Naive thymus-derived CD4-positive, alpha-beta T cell (primary cell): ENCODE measurements at regions of chr16 and their contacts with region 1.

Region 1: DNA sequence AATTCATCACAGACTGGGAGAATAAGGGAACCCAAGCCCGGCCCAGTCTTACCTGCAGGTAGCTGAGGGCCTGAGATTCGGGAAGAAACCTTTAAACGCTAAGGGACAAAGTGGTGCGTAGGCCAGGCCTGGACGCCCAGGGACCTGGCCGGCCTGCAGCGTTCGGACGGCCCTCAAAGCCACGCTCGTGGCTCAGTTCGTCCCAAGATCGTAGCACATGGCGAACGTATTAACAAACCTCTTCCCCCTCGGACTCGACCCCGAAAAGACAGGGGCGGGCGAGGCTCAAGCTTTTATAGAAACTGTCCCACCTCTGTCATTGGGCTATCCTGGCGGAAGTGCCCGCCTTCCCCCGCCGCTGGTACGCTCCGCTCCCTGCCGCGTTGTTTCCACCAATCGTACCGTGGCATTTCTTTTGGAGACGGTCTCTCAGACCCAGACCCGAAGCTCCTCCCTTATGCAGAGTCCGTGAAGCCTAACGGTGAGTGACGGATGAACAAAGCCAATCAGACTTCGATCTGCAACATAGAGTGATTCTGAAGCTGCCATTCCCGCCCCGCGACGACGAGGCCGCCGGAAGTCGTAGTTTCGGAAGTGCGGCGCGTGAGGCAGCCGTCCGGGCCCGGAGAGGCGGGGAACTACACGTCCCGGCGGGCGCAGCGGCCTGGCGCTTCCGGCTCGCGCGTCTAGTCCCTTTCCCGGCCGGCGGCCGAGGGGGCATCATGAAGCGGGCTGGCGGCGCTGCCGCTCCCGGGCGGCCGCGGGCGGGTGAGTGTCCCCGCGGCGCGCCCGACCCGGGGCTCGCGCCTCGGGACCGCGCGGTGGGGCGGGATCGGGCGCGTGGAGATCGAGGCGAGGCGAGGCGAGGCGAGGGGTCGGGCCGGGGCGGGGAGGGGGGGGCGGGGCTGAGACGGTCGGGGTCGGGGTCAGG is at the start of gene TRAF7:
- DNase-seq: peak; percentile 85 to 99 (median 98)
- ATAC-seq: peak; percentile 95
- H3K4me3 ChIP-seq: peak within 1 kb of the TSS; percentile 79
- H3K4me3 Mint-ChIP-seq: peak within 1 kb of the TSS; percentile 85 to 99 (median 94)
- H3K27ac ChIP-seq: peak within 1 kb of the TSS; percentile 80
- H3K27ac Mint-ChIP-seq: peak within 1 kb of the TSS; percentile 78 to 95 (median 91)
- H3K4me1 ChIP-seq: peaks cover 21 to 52% of the 10 kb centered on the region in 2 donors
- H3K4me1 Mint-ChIP-seq: peaks cover 20 to 59% (median 44%) of the 10 kb centered on the region in 7 donors
- H3K27me3 ChIP-seq: no peaks in the 10 kb centered on the region
- H3K27me3 Mint-ChIP-seq: no peaks in the 10 kb centered on the region
- total RNA-seq, gene TRAF7: 30.0 to 58.3 (median 36.7) TPM

Region 2: DNA sequence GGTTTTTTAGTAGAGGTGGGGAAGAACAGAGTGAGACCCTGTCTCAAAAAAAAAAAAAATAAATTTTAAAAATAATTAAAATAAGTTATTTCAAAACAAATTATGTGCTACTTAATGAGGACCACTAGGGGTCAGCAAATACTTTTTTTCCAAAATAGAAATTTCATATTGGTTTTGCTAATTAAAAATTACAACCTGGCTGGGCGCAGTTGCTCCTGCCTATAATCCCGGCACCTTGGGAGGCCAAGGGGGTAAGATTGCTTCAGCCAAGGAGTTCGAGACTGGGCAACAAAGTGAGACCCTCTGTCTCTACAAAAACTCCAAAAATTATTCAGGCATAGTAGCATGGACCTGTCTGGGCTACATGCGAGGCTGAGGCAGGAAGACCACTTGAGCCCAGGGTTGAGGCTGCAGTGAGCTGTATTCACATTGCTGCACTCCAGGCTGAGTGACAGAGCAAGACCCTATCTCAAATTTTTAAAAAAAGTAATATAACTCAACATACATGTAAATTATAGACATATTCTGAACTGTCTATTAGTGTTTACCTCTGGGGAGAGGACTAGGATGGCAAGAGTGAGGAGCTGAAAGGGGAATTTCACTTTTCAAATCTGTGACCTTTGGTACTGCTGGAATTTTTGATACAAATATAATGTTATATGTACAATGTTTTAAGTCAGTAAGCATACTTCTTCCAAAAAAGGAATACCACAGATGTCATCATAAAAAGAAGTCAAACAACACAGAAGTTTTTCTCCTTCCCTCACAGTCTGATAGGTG is 291.5 kb before region 1 on chr16:
- CTCF ChIA-PET with region 1: no interaction called
- POLR2A ChIA-PET with region 1: no interaction called
- intact Hi-C with region 1: loop called in 1 of 2 experiments (anchors 2 kb)
- DNase-seq: peak in 6 of 9 donors; percentile 21 to 43 (median 35)
- ATAC-seq: no peak
- H3K4me3 ChIP-seq: no peak overlapping the region
- H3K4me3 Mint-ChIP-seq: no peak overlapping the region
- H3K27ac ChIP-seq: no peak overlapping the region
- H3K27ac Mint-ChIP-seq: peak overlapping the region in 1 of 9 donors; percentile 14
- H3K4me1 ChIP-seq: no peaks in the 10 kb centered on the region
- H3K4me1 Mint-ChIP-seq: no peaks in the 10 kb centered on the region
- H3K27me3 ChIP-seq: no peaks in the 10 kb centered on the region
- H3K27me3 Mint-ChIP-seq: peaks cover 0 to 44% (median 9%) of the 10 kb centered on the region in 5 donors

Region 3: DNA sequence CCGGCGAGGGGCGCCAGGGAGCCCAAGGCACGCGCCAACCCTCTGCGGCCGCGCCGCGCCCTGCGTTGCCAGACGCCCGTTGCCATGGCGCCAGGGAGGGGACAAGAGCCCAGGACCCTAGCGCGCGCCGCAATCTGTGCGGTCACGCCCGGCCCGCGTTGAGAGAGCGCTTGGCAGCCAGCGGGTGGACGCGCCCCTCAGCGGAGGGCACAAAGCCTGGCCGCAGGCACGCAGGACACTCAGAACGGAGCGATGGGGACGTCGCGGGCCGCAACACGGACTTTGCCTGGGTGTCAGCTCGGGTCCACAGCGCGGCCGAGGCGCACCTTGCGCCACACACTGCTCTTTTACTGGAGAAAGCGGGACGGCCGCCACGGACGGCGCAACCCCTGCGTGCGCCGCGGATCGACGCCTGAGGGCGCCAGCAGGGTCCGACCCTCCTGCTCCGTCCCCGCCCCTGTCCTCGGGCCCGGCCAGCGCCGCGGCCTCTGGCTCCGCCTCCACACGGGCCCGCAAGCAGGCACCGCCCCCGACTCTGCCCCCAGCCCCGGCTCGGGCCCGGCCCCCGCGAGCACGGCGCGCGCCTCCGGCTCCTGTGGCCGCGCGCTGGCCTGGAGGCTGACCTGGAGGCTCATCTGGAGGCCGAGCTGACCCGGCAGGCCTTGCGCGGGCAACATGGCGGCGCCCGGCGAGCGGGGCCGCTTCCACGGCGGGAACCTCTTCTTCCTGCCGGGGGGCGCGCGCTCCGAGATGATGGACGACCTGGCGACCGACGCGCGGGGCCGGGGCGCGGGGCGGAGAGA is 171.6 kb before region 1 on chr16 and contains the start of gene GFER:
- CTCF ChIA-PET with region 1: no interaction called
- POLR2A ChIA-PET with region 1: interaction called, 18 read pairs
- intact Hi-C with region 1: no loop called
- DNase-seq: peak in 7 of 9 donors; percentile 24 to 88 (median 48)
- ATAC-seq: peak; percentile 89
- H3K4me3 ChIP-seq: peak within 1 kb of the TSS; percentile 71
- H3K4me3 Mint-ChIP-seq: peak within 1 kb of the TSS; percentile 66 to 90 (median 84)
- H3K27ac ChIP-seq: peak within 1 kb of the TSS; percentile 69
- H3K27ac Mint-ChIP-seq: peak within 1 kb of the TSS; percentile 4 to 89 (median 71)
- H3K4me1 ChIP-seq: peaks cover 0 to 13% of the 10 kb centered on the region in 2 donors
- H3K4me1 Mint-ChIP-seq: peaks cover 2 to 27% (median 17%) of the 10 kb centered on the region in 7 donors
- H3K27me3 ChIP-seq: peaks cover 0 to 3% of the 10 kb centered on the region in 2 donors
- H3K27me3 Mint-ChIP-seq: peaks cover 11 to 37% (median 14%) of the 10 kb centered on the region in 5 donors
- total RNA-seq, gene GFER: 14.0 to 28.2 (median 18.1) TPM

Region 4: GRCh38 chr16:2023098-2023925 is 132.0 kb before region 1 on chr16:
- CTCF ChIA-PET with region 1: interaction called, 6 read pairs
- POLR2A ChIA-PET with region 1: interaction called, 32 read pairs
- intact Hi-C with region 1: loop called (anchors 1 kb)
- DNase-seq: peak; percentile 88 to 98 (median 93)
- ATAC-seq: peak; percentile 99
- H3K4me3 ChIP-seq: peak overlapping the region; percentile 34
- H3K4me3 Mint-ChIP-seq: peak overlapping the region; percentile 56 to 83 (median 76)
- H3K27ac ChIP-seq: peak overlapping the region; percentile 67
- H3K27ac Mint-ChIP-seq: peak overlapping the region; percentile 66 to 95 (median 79)
- H3K4me1 ChIP-seq: peaks cover 14 to 20% of the 10 kb centered on the region in 2 donors
- H3K4me1 Mint-ChIP-seq: peaks cover 13 to 30% (median 22%) of the 10 kb centered on the region in 7 donors
- H3K27me3 ChIP-seq: peaks cover 0 to 8% of the 10 kb centered on the region in 2 donors
- H3K27me3 Mint-ChIP-seq: peaks cover 7 to 58% (median 15%) of the 10 kb centered on the region in 5 donors

Region 5: GRCh38 chr16:2223375-2224182 is 68.2 kb after region 1 on chr16 and contains the start of gene E4F1:
- CTCF ChIA-PET with region 1: no interaction called
- POLR2A ChIA-PET with region 1: interaction called, 4 read pairs
- intact Hi-C with region 1: loop called (anchors 1 to 5 kb)
- DNase-seq: peak; percentile 91 to 99 (median 97)
- ATAC-seq: peak; percentile 99
- H3K4me3 ChIP-seq: peak within 1 kb of the TSS; percentile 81
- H3K4me3 Mint-ChIP-seq: peak within 1 kb of the TSS; percentile 79 to 91 (median 88)
- H3K27ac ChIP-seq: peak within 1 kb of the TSS; percentile 81
- H3K27ac Mint-ChIP-seq: peak within 1 kb of the TSS; percentile 45 to 92 (median 86)
- H3K4me1 ChIP-seq: peaks cover 7 to 9% of the 10 kb centered on the region in 2 donors
- H3K4me1 Mint-ChIP-seq: peaks cover 0 to 25% (median 19%) of the 10 kb centered on the region in 7 donors
- H3K27me3 ChIP-seq: no peaks in the 10 kb centered on the region
- H3K27me3 Mint-ChIP-seq: peaks cover 0 to 3% (median 0%) of the 10 kb centered on the region in 5 donors
- total RNA-seq, gene E4F1: 31.3 to 45.6 (median 36.8) TPM

Region 6: DNA sequence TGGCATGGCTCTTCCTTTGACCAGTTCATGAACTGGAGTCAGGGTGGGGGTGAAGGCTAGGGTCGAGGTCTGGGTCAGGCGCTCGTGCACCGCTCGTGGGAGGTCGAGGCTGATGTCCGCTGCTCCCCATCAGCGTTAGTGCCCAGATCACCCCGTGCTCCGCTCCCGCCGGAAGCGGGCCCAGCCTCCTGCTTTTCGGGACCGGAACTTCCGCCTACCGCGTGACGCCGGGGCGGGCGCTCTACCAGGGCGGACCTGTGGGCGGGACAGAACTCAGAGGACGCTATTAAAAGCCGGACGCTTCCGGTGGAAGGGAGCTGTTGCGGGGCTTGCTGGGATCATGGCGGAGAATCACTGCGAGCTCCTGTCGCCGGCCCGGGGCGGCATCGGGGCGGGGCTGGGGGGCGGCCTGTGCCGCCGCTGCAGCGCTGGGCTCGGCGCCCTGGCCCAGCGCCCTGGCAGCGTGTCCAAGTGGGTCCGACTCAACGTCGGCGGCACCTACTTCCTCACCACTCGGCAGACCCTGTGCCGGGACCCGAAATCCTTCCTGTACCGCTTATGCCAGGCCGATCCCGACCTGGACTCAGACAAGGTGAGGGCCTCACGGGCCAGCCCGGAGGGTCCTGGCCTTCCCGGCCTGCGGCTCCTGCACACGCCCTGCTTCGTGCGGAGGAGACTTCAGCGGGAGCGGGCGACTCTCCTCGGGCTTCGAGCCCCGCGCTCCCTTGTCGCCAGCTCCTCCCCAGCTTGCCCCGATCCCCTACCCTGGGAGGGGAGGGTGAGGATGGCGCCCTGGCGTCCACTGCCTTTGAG is 527.1 kb after region 1 on chr16 and contains the start of gene KCTD5:
- CTCF ChIA-PET with region 1: no interaction called
- POLR2A ChIA-PET with region 1: no interaction called
- intact Hi-C with region 1: loop called in 1 of 2 experiments (anchors 5 kb)
- DNase-seq: peak; percentile 89 to 98 (median 94)
- ATAC-seq: peak; percentile 97
- H3K4me3 ChIP-seq: peak within 1 kb of the TSS; percentile 81
- H3K4me3 Mint-ChIP-seq: peak within 1 kb of the TSS; percentile 89 to 99 (median 94)
- H3K27ac ChIP-seq: peak within 1 kb of the TSS; percentile 92
- H3K27ac Mint-ChIP-seq: peak within 1 kb of the TSS; percentile 82 to 99 (median 94)
- H3K4me1 ChIP-seq: peaks cover 8 to 18% of the 10 kb centered on the region in 2 donors
- H3K4me1 Mint-ChIP-seq: peaks cover 12 to 29% (median 25%) of the 10 kb centered on the region in 7 donors
- H3K27me3 ChIP-seq: no peaks in the 10 kb centered on the region
- H3K27me3 Mint-ChIP-seq: no peaks in the 10 kb centered on the region
- total RNA-seq, gene KCTD5: 21.4 to 37.5 (median 24.6) TPM